Activated CD8-positive, alpha-beta memory T cell treated with anti-CD3 and anti-CD28 coated beads, Interleukin-2, amount 10 ng/mL, durations not matched to agents 7 days and 5 days (primary cell): ENCODE measurements at regions of chr14 and their contacts with region 1.

Region 1: GRCh38 chr14:72904840-72905561 is 11.1 kb upstream of the DPF3 start:
- DNase-seq: peak; percentile 75
- ATAC-seq: peak; percentile 77
- H3K4me3 Mint-ChIP-seq: no peak overlapping the region
- H3K27ac Mint-ChIP-seq: no peak overlapping the region
- H3K4me1 Mint-ChIP-seq: peaks cover 17% of the 10 kb centered on the region
- H3K27me3 Mint-ChIP-seq: peaks cover 53% of the 10 kb centered on the region

Region 2: DNA sequence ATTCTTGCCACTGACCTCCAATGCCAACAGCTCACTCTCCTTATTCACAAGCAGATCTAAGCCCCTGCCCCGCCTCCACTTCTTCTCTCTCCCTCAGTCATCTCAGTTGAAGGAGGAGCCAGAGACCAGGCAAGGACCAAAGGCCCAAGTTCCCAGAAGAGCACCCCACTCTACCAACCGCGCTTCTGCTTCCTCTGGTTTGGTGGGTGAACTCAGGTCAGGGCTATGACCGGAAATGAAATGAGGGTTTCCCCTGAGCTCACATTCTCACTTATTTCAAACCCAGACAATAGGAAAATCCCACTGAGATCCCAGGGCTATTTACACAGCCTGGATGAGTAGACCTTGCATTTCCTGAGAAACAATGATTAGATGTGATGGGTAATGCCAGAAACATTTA is 21.0 kb before region 1 on chr14:
- CTCF ChIA-PET with region 1: interaction called, 10 read pairs
- DNase-seq: peak; percentile 82
- ATAC-seq: peak; percentile 87
- H3K4me3 Mint-ChIP-seq: peak overlapping the region; percentile 9
- H3K27ac Mint-ChIP-seq: peak overlapping the region; percentile 55
- H3K4me1 Mint-ChIP-seq: peaks cover 54% of the 10 kb centered on the region
- H3K27me3 Mint-ChIP-seq: peaks cover 23% of the 10 kb centered on the region

Region 3: DNA sequence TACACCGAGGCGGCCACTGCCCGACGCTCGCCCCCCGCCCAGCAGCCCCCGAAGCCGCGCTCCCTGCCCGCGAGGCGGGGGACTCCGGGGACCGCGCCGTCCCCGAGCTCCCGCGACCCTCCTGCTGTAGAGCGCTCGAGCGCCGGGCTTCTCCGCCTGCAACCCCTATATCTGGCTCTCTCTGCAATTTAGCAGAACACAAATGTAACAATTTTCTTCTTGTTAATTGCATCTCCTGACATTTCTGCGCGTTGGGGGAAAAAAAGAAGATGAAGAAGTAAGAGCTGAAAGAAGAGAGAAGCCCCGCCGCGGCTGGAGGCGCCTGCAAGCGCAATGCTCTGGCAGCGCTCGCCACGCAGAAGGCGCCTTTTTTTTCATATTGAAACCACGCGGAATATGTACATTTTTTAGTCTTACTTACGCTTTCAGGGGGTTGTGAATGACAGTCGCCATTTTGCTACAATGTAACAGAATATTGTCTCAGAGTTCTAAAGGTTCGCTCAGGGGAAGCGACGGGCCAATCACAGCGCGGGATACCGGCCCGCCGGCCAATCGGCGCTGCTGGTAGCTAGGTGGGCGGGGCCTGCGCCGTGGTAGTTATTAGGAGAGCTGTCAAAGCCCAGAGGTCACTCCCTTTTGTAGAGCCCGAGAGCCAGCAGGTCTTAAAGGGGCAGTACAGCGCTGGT is 11.2 kb before region 1 on chr14 and contains the start of gene DPF3:
- CTCF ChIA-PET with region 1: interaction called, 35 read pairs
- DNase-seq: peak; percentile 98
- ATAC-seq: peak; percentile 98
- H3K4me3 Mint-ChIP-seq: peak within 1 kb of the TSS; percentile 83
- H3K27ac Mint-ChIP-seq: peak within 1 kb of the TSS; percentile 51
- H3K4me1 Mint-ChIP-seq: peaks cover 27% of the 10 kb centered on the region
- H3K27me3 Mint-ChIP-seq: peaks cover 66% of the 10 kb centered on the region
- total RNA-seq, gene DPF3: 10.2 to 12.2 TPM

Region 4: GRCh38 chr14:72948481-72949138 is 43.6 kb after region 1 on chr14:
- CTCF ChIA-PET with region 1: interaction called, 11 read pairs
- DNase-seq: peak; percentile 77
- ATAC-seq: peak; percentile 41
- H3K4me3 Mint-ChIP-seq: no peak overlapping the region
- H3K27ac Mint-ChIP-seq: peak overlapping the region; percentile 52
- H3K4me1 Mint-ChIP-seq: peaks cover 21% of the 10 kb centered on the region
- H3K27me3 Mint-ChIP-seq: no peaks in the 10 kb centered on the region